ENCODE measurements at regions of chr19 and their contacts with region 1.

Region 1: GRCh38 chr19:50252111-50252886 is 48.9 kb downstream of the MYH14 start:
- DNase-seq: peak; percentile 72
- ATAC-seq: peak; percentile 87
- H3K4me3 ChIP-seq: no peak overlapping the region
- H3K27ac ChIP-seq: no peak overlapping the region
- H3K4me1 ChIP-seq: no peaks in the 10 kb centered on the region
- H3K27me3 ChIP-seq: no peaks in the 10 kb centered on the region
- CTCF ChIP-seq: peak; percentile 94

Region 2: GRCh38 chr19:50167314-50167721 is 85.0 kb before region 1 on chr19:
- CTCF ChIA-PET with region 1: no interaction called
- POLR2A ChIA-PET with region 1: no interaction called
- intact Hi-C with region 1: no loop called
- DNase-seq: peak; percentile 36
- ATAC-seq: no peak; the same call in 1 of the 2 replicates
- H3K4me3 ChIP-seq: no peak overlapping the region
- H3K27ac ChIP-seq: no peak overlapping the region
- H3K4me1 ChIP-seq: peaks cover 13% of the 10 kb centered on the region; the same call in 1 of the 2 replicates
- H3K27me3 ChIP-seq: no peaks in the 10 kb centered on the region
- CTCF ChIP-seq: no peak

Region 3: GRCh38 chr19:50290011-50290410 is 37.7 kb after region 1 on chr19:
- CTCF ChIA-PET with region 1: no interaction called
- POLR2A ChIA-PET with region 1: no interaction called
- intact Hi-C with region 1: no loop called
- DNase-seq: no peak
- ATAC-seq: no peak
- H3K4me3 ChIP-seq: no peak overlapping the region
- H3K27ac ChIP-seq: no peak overlapping the region
- H3K4me1 ChIP-seq: no peaks in the 10 kb centered on the region
- H3K27me3 ChIP-seq: no peaks in the 10 kb centered on the region
- CTCF ChIP-seq: no peak

Region 4: GRCh38 chr19:50300814-50301606 is 48.7 kb after region 1 on chr19:
- CTCF ChIA-PET with region 1: interaction called, 4 read pairs
- POLR2A ChIA-PET with region 1: no interaction called
- intact Hi-C with region 1: loop called (anchors 5 kb)
- DNase-seq: peak; percentile 94
- ATAC-seq: peak; percentile 99
- H3K4me3 ChIP-seq: peak overlapping the region; percentile 33; the same call in 1 of the 2 replicates
- H3K27ac ChIP-seq: peak overlapping the region; percentile 85
- H3K4me1 ChIP-seq: peaks cover 17% of the 10 kb centered on the region
- H3K27me3 ChIP-seq: no peaks in the 10 kb centered on the region
- CTCF ChIP-seq: no peak

Region 5: DNA sequence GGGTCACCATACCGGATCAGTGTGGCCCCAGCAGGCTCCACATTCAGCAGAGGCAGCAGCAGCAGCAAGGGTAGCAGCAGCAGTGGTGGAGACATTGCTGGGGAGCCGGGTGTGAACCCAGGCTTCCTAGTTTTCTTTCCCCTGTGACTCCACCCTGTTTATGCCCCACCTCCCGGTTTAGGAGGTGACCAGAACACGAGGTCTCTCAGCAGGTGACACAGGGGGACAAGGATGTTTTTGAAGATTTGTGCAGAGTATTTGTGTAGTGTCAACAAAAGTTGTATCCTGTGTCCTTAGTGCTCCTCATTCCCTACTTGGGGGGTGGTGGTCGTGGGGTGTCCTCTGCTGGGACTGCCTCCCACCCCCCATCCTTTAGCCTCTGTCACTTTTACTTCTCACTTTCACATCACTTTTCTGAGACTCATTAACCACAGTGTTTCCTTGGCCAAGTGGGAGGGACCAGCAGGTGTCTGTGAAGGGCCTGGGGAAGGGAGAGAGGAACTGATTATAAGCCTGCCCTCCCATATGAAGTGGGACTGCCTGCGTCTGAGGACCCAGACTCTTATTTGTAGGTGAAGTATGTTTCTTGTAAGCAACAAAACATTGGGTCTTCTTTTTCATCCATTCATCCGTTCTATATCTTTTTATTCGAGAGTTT is 92.5 kb after region 1 on chr19:
- CTCF ChIA-PET with region 1: no interaction called
- POLR2A ChIA-PET with region 1: no interaction called
- intact Hi-C with region 1: no loop called
- DNase-seq: no peak
- ATAC-seq: no peak
- H3K4me3 ChIP-seq: no peak overlapping the region
- H3K27ac ChIP-seq: no peak overlapping the region
- H3K4me1 ChIP-seq: no peaks in the 10 kb centered on the region
- H3K27me3 ChIP-seq: no peaks in the 10 kb centered on the region
- CTCF ChIP-seq: no peak

Region 6: GRCh38 chr19:50357178-50358100 is 105.1 kb after region 1 on chr19:
- CTCF ChIA-PET with region 1: interaction called, 5 read pairs
- POLR2A ChIA-PET with region 1: no interaction called
- intact Hi-C with region 1: loop called (anchors 1 kb)
- DNase-seq: peak; percentile 82
- ATAC-seq: peak; percentile 84
- H3K4me3 ChIP-seq: peak overlapping the region; percentile 60
- H3K27ac ChIP-seq: no peak overlapping the region
- H3K4me1 ChIP-seq: no peaks in the 10 kb centered on the region; the same call in 1 of the 2 replicates
- H3K27me3 ChIP-seq: no peaks in the 10 kb centered on the region
- CTCF ChIP-seq: peak; percentile 89